SK-N-SH (cell line): ENCODE measurements at regions of chr17 and their contacts with region 1.

Region 1: GRCh38 chr17:6853764-6854442 is 22.4 kb upstream of the TEKT1 start:
- DNase-seq: no peak
- H3K4me3 ChIP-seq: no peak overlapping the region
- H3K27ac ChIP-seq: no peak overlapping the region
- H3K4me1 ChIP-seq: no peaks in the 10 kb centered on the region
- H3K27me3 ChIP-seq: peaks cover 45% of the 10 kb centered on the region; the same call in 1 of the 2 replicates
- CTCF ChIP-seq: peak; percentile 45
- EP300 ChIP-seq: no peak
- RAD21 ChIP-seq: no peak

Region 2: DNA sequence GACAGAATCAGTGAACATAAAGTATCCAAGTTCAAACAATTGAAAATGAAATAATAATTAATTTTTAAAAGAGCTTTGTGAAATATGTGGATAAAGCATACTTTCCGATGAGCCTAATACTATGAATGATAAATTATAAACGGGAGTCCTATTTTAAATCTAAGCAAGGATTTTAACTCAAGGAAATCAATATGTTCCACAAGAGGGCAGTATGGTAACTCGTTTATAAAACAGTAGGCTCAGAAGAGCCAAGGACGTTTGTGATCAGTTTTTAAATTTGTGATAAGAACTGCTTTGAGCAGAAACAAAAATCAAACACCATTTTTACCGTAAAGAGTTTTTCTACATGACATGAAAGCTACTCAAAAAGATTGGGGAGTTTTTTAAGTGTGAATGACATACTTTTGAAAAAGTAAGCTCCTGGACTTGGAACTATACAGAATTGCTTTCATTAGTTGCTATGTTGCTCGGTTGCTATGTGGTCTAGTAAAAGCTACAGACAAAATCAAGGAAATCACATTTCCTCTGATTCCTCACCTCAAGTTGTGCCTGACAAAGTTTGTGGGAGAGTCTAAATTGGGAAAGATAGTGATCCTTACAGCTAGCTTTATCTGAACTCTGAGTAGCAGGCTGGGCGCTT is 10.5 kb before region 1 on chr17:
- CTCF ChIA-PET with region 1: interaction called, 15 read pairs
- POLR2A ChIA-PET with region 1: no interaction called
- DNase-seq: peak; percentile 26
- H3K4me3 ChIP-seq: no peak overlapping the region
- H3K27ac ChIP-seq: no peak overlapping the region
- H3K4me1 ChIP-seq: no peaks in the 10 kb centered on the region
- H3K27me3 ChIP-seq: peaks cover 54% of the 10 kb centered on the region; the same call in 1 of the 2 replicates
- CTCF ChIP-seq: peak; percentile 74
- EP300 ChIP-seq: no peak
- RAD21 ChIP-seq: peak; percentile 39; the same call in 1 of the 2 replicates

Region 3: DNA sequence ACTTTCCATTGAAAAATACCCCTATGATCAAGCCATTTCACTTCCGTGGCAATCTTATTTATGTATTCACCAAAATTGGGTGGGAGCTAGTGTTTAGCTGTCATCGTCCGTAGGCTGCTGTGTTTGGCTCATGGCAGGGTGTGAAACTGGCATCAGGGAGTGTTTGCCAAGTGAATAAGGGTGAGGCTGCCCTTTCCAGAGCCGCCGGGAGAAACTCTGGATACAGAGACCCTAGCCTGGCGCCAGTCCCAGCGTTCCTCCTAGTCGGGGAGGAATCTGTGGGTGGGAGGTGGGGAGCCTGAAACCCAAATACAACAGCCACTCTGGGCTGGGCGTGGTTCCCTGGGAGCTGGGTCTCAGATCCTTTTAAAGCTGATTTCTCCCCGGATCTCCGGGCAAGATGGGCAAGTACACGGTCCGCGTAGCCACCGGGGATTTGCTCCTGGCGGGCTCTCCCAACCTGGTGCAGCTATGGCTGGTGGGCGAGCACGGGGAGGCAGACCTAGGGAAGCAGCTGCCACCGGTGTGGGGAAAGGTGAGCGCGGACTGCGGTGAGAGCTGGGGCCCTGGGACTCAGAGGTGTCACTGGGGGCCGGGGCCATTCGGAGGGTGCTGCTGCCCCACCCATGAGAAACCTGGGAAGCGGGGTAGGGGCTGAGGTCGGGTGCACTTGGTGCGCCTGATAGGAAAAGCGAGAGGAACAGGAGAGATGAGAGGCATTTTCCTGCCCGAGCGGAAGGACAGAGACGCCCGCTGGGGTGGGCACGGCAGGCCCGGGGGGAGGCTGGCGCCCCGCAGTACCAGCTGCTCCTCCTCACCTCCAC is 39.7 kb after region 1 on chr17:
- CTCF ChIA-PET with region 1: no interaction called
- POLR2A ChIA-PET with region 1: no interaction called
- DNase-seq: no peak
- H3K4me3 ChIP-seq: no peak overlapping the region
- H3K27ac ChIP-seq: no peak overlapping the region
- H3K4me1 ChIP-seq: no peaks in the 10 kb centered on the region
- H3K27me3 ChIP-seq: no peaks in the 10 kb centered on the region
- CTCF ChIP-seq: no peak
- EP300 ChIP-seq: no peak
- RAD21 ChIP-seq: no peak

Region 4: GRCh38 chr17:7014261-7014994 is 160.5 kb after region 1 on chr17:
- CTCF ChIA-PET with region 1: no interaction called
- POLR2A ChIA-PET with region 1: no interaction called
- DNase-seq: peak; percentile 94
- H3K4me3 ChIP-seq: peak overlapping the region; percentile 78 to 85
- H3K27ac ChIP-seq: peak overlapping the region; percentile 95
- H3K4me1 ChIP-seq: peaks cover 12 to 36% of the 10 kb centered on the region in 2 experiments; a peak in 2 of 4 replicates
- H3K27me3 ChIP-seq: no peaks in the 10 kb centered on the region
- CTCF ChIP-seq: peak; percentile 61
- EP300 ChIP-seq: no peak; a peak in 1 of 4 replicates
- RAD21 ChIP-seq: no peak